Thyroid gland (tissue), 4 donors: ENCODE measurements at regions of chr12 and their contacts with region 1.

Region 1: DNA sequence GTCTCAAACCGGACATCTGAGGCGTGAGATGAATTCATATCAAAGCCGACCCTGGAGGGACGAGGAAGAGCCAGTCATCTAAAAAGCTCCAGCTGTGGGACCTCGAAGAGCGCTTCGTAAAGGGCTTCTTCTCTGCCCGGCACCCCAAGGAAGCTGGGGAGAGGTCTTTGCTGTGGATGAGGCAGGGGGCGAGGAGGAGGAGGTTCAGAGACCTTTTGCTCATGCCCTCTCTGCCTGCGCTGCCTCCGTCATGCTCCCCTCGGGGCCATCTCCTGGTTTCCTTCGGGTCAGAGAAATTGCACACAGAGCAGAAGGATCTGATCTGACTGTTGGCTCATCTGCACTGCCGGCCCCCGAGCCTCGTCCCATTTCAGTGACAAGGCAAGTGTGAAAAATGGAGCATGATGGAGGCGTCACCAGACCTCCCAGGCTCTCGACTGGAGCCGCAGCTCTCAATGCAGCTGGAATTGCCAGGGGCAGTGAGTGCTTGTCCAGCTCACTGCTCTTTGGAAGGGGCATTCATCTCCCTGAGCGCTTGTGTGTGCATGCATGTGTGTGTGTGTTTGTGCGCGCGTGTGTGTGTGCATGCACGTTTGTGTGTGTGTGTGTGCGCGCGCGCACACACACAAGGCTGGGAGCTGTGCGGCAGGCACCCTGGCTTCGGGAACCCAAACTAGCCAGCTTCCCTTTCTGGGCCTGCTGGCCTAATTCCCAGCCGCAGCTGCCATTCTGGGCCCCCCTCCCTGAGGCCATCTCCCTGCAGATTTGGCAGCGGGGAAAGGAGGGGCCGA is 9.2 kb downstream of the CABP1 start:
- DNase-seq: no peak
- H3K4me3 ChIP-seq: no peak overlapping the region
- H3K27ac ChIP-seq: no peak overlapping the region
- H3K4me1 ChIP-seq: peaks cover 11 to 17% of the 10 kb centered on the region in 2 donors
- H3K27me3 ChIP-seq: no peaks in the 10 kb centered on the region
- CTCF ChIP-seq: peak in 1 of 6 experiments; percentile 6
- POLR2A ChIP-seq: no peak

Region 2: DNA sequence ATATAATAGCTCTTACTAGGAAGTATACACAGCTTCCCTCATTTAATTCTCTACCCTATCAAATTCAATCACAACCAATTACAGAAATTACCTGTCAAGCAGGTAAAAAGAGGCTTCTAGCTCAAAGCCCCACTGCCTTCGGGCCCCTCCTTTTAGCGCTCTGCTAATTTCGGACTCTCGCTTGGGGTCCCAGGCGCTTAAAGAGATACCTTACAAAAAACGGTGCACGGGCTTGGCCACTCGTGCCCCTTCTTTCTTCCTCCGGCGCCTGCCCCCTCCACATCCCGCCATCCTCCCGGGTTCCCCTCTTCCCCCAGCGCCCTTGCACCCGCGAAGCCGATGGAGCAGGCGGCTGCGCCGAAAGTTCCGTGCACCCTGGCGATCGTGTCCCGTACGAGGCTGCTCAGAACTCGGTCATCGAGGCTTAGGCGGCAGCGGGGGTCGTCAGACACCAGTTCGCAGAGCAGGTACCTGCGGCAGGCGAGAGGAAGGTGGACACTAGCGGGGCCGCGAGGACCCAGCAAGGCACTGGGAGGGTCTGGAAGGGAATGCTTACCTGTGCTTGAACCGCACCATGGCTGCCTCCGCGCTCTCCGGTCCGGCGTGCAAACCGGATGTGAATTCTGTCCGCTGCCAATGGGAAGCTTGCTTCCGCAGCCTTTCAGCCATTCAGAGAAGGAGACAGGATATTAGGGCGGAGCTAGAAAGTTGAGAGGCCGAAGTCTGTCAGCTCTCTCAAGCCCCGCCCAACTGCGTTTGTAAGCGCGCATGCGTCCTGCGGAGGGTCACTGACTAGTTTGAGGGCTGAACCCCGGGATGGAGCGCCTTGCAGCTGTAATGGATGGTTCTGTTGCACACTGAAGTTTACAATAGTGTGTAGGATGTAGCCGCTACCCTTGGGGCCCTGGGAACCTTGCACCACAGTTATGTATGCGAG is 68.6 kb before region 1 on chr12 and contains the start of gene POP5:
- intact Hi-C with region 1: loop called (anchors 5 kb)
- DNase-seq: peak; percentile 98
- H3K4me3 ChIP-seq: peak within 1 kb of the TSS; percentile 36 to 78 (median 64)
- H3K27ac ChIP-seq: peak within 1 kb of the TSS in 2 of 3 donors; percentile 31 to 41
- H3K4me1 ChIP-seq: peaks cover 12 to 19% of the 10 kb centered on the region in 2 donors
- H3K27me3 ChIP-seq: no peaks in the 10 kb centered on the region
- CTCF ChIP-seq: no peak
- POLR2A ChIP-seq: peak in 1 of 2 donors; percentile 82
- total RNA-seq, gene POP5: 27.9 to 72.0 (median 38.5) TPM

Region 3: DNA sequence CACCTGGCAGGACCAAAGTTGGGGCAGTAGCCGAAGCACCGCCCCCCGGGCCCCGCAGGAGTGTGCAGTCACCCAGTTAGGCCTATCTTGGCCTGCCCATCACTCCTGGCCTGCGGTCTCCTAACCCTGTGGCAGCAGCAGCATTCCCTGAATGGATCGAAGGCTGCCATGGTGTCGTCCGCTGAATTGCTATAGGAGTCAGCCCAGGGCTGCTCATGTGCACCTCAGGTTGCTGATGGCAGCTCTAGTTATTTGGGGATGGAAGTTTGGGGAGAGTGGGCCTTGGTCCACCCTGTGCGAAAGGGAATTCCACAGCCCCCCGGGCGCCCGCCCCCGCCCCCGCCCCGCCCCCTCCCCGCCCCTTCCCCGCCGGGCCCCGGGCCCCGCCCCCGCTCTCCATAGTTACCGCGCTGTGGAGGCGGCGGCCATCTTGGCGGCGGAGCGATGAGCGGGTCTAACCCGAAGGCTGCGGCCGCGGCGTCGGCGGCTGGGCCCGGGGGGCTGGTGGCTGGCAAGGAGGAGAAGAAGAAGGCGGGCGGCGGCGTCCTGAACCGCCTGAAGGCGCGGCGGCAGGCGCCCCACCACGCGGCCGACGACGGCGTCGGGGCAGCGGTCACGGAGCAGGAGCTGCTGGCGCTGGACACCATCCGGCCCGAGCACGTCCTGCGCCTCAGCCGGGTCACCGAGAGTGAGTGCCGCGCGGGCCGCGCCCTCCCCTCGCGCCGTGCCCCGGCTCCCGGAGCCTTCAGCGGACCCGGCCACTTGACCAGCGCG is 60.6 kb after region 1 on chr12 and contains the start of gene UNC119B:
- intact Hi-C with region 1: loop called (anchors 2 kb)
- DNase-seq: peak; percentile 71 to 72
- H3K4me3 ChIP-seq: peak within 1 kb of the TSS; percentile 33 to 87 (median 85)
- H3K27ac ChIP-seq: peak within 1 kb of the TSS; percentile 91 to 97 (median 94)
- H3K4me1 ChIP-seq: peaks cover 24 to 34% of the 10 kb centered on the region in 2 donors
- H3K27me3 ChIP-seq: no peaks in the 10 kb centered on the region
- CTCF ChIP-seq: no peak
- POLR2A ChIP-seq: peak in 1 of 2 donors; percentile 71
- total RNA-seq, gene UNC119B: 44.1 to 65.3 (median 61.6) TPM

Region 4: DNA sequence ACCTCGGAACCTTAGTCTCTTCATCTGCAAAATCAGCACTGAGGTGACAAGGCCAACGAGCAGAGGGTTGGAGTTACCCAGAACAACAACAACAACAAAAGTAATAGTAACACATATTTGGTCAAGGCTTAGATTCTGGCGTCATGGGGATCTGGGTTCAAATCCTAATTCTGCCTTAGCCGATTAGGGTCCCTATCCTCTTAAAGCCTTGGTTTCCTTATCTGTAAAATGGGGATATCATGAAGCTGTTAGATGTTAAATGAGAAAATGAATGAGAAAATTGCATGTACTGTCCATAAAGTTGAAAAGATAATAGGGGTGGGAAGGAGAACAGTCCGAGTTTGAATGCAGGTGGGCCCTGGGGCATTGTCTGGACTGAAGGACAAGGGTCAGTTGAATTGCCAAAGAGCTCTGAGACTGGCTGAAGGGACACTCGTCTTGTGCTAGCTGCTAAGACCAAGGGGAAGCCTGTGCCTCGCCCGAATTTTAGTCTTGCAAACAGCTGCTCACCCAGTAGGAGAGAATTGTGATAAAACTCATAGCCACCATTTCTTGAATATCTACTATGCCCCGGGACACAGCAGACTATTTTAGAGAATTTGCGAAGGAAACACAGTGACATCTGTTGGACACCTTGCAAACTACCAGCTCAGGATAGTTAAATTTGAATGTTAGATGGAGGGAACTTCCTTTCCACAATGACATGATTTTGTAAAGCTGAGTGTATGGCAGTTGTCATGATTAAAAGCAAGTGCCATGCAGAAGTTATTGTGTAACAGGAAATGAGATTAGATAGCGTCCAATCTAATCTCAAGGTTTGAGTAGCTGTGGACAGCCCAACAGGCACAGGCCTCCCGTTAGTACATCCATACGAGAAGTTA is 321.9 kb after region 1 on chr12:
- intact Hi-C with region 1: loop called (anchors 5 kb)
- DNase-seq: peak; percentile 19 to 26
- H3K4me3 ChIP-seq: no peak overlapping the region
- H3K27ac ChIP-seq: no peak overlapping the region
- H3K4me1 ChIP-seq: no peaks in the 10 kb centered on the region
- H3K27me3 ChIP-seq: no peaks in the 10 kb centered on the region
- CTCF ChIP-seq: peak; percentile 25 to 82 (median 68)
- POLR2A ChIP-seq: no peak